Heart left ventricle (tissue), 16 donors: ENCODE measurements at regions of chr4 and their contacts with region 1.

Region 1: GRCh38 chr4:113539408-113539807 is 222.1 kb downstream of the CAMK2D start:
- DNase-seq: no peak
- ATAC-seq: no peak
- H3K4me3 ChIP-seq: no peak overlapping the region
- H3K27ac ChIP-seq: peak overlapping the region in 6 of 12 donors; percentile 19 to 88 (median 77)
- H3K4me1 ChIP-seq: peaks cover 2 to 70% (median 40%) of the 10 kb centered on the region in 12 donors
- H3K27me3 ChIP-seq: no peaks in the 10 kb centered on the region
- CTCF ChIP-seq: no peak
- POLR2A ChIP-seq: no peak

Region 2: GRCh38 chr4:113404841-113405240 is 134.6 kb before region 1 on chr4:
- intact Hi-C with region 1: loop called in 1 of 10 experiments (anchors 10 kb)
- DNase-seq: peak in 2 of 5 donors; percentile 21 to 28
- ATAC-seq: peak in 3 of 4 donors; percentile 22 to 59 (median 48)
- H3K4me3 ChIP-seq: no peak overlapping the region
- H3K27ac ChIP-seq: no peak overlapping the region
- H3K4me1 ChIP-seq: peaks cover 0 to 19% (median 2%) of the 10 kb centered on the region in 12 donors
- H3K27me3 ChIP-seq: no peaks in the 10 kb centered on the region
- CTCF ChIP-seq: no peak
- POLR2A ChIP-seq: no peak

Region 3: DNA sequence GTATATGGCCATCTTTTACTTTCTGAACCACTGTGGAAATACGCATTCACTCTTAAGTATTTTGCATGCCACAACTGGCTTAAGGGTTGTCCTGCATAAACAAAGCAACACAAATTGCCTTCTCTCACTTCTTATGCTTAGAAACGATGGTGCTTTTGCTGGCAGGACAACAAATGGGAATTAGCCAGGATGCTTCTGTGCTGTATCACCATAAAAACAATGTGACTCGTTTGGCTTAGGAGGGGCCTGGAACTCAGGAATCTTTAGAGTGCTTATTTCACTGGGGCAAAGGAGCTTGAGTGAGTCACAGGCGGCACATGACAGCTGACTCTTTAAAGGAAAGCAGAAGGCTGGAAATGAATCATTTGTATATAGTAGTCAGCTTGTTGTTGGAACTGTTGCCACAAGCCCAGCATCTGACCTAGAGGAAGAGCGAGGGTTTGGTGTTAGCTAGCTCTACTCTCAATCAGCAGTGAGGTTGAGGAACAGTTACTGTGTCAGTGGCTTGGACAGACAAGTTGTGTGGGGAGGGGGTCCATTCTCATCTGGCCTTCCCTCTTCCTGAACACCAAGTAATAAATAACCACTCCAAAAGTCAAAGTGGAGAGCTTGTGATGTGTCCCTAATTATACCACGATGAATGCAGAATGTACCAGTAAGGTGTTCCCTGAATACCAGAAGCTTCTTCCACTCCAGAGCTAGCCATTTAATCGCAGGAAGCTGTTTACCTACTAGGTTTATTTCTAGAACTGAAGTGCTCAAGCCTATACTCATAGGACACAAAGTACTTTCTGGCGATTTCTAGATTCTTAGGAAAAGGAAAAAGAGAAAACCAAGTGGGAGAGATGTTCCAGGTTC is 71.0 kb before region 1 on chr4:
- intact Hi-C with region 1: loop called in 1 of 10 experiments (anchors 10 kb)
- DNase-seq: peak in 4 of 5 donors; percentile 71 to 89 (median 82)
- ATAC-seq: peak; percentile 92 to 97 (median 96)
- H3K4me3 ChIP-seq: peak overlapping the region in 1 of 12 donors; percentile 1
- H3K27ac ChIP-seq: peak overlapping the region; percentile 75 to 95 (median 86)
- H3K4me1 ChIP-seq: peaks cover 2 to 50% (median 31%) of the 10 kb centered on the region in 12 donors
- H3K27me3 ChIP-seq: no peaks in the 10 kb centered on the region
- CTCF ChIP-seq: no peak
- POLR2A ChIP-seq: peak in 1 of 2 donors; percentile 43